ENCODE measurements at regions of chr20 and their contacts with region 1.

Region 1: DNA sequence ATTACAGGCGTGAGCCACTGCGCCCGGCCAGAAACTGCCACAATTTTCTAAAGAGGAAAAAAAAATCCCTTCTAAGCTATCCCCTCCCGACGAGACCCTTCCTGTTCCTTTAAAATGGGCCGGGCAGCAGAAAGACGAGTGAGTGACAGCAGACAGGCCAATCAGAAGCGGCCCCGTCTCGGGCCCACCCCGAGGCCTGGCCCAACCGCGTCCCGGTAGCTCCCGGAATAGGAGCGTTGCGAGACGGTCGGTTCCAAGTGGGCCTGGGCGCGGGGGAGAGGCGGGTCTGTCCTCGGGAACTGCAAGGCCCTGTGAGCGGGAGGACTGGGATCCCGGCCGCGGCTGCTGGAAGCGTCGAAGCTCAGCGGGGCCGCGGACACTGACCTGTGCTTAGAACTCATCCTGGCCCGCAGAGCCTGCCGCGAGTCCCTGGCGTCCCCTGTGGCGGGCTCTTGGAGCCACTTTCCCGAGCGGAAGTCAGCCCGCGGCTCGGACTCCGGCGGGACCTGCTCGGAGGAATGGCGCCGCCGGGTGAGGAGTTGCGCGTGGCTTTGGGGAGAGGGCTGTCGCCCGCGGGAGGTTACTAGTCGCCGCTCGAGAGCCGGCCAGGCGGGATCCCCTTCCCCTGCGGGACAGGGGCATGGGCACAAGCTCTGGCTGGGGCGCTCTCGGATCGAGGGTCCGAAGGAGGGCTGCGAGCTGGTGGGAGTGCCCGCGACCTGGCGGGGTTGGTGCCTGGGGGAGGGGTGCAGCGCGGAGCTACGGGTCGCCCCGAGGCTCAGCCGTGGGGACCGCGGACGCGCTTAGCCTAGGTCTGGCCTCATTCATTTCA is at the starts of genes MROH8 and RPN2:
- DNase-seq: peak; percentile 91 to 95
- H3K4me3 ChIP-seq: peak within 1 kb of the TSS; percentile 80 to 97 (median 92)
- H3K27ac ChIP-seq: peak within 1 kb of the TSS; percentile 98
- H3K4me1 ChIP-seq: peaks cover 0 to 8% (median 4%) of the 10 kb centered on the region in 4 experiments; a peak in 5 of 7 replicates
- H3K27me3 ChIP-seq: no peaks in the 10 kb centered on the region
- CTCF ChIP-seq: no peak
- EP300 ChIP-seq: peak in 1 of 2 experiments; percentile 94; a peak in 1 of 3 replicates
- POLR2A ChIP-seq: peak; percentile 66 to 72
- RAD21 ChIP-seq: no peak
- total RNA-seq, gene MROH8: 0.48 and 0.50 TPM in 2 replicates
- total RNA-seq, gene RPN2: 226 and 236 TPM in 2 replicates

Region 2: DNA sequence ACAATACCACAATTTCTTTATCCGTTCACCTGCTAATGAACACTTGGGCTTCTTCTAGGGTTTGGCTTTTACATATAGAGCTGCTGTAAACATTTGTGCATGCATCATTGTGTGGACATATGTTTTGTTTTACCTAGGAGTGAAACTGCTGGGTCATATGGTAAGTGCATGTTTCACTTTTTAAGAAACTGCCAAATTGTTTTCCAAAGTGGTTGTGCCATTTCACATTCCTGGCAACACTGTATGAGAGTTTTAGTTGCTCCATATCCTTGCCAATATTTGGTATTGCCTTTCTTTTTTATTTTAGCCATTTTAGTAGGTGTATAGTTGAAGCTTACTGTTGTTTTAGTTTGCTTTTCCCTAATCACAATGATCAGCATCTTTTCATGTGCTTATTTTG is 14.0 kb before region 1 on chr20:
- CTCF ChIA-PET with region 1: interaction called, 21 read pairs
- POLR2A ChIA-PET with region 1: interaction called, 16 read pairs
- DNase-seq: no peak
- H3K4me3 ChIP-seq: no peak overlapping the region
- H3K27ac ChIP-seq: no peak overlapping the region
- H3K4me1 ChIP-seq: no peaks in the 10 kb centered on the region
- H3K27me3 ChIP-seq: no peaks in the 10 kb centered on the region
- CTCF ChIP-seq: no peak
- EP300 ChIP-seq: no peak
- POLR2A ChIP-seq: no peak
- RAD21 ChIP-seq: no peak